AG04450 (cell line): ENCODE measurements at regions of chr9 and their contacts with region 1.

Region 1: GRCh38 chr9:5593904-5594303 is 35.0 kb upstream of the RIC1 start:
- DNase-seq: no peak
- H3K4me3 ChIP-seq: no peak overlapping the region
- H3K27ac ChIP-seq: no peak overlapping the region
- H3K27me3 ChIP-seq: no peaks in the 10 kb centered on the region
- CTCF ChIP-seq: no peak

Region 2: GRCh38 chr9:5008202-5008601 is 585.7 kb before region 1 on chr9:
- CTCF ChIA-PET with region 1: no interaction called
- POLR2A ChIA-PET with region 1: no interaction called
- DNase-seq: no peak
- H3K4me3 ChIP-seq: no peak overlapping the region
- H3K27ac ChIP-seq: no peak overlapping the region
- H3K27me3 ChIP-seq: no peaks in the 10 kb centered on the region
- CTCF ChIP-seq: no peak

Region 3: DNA sequence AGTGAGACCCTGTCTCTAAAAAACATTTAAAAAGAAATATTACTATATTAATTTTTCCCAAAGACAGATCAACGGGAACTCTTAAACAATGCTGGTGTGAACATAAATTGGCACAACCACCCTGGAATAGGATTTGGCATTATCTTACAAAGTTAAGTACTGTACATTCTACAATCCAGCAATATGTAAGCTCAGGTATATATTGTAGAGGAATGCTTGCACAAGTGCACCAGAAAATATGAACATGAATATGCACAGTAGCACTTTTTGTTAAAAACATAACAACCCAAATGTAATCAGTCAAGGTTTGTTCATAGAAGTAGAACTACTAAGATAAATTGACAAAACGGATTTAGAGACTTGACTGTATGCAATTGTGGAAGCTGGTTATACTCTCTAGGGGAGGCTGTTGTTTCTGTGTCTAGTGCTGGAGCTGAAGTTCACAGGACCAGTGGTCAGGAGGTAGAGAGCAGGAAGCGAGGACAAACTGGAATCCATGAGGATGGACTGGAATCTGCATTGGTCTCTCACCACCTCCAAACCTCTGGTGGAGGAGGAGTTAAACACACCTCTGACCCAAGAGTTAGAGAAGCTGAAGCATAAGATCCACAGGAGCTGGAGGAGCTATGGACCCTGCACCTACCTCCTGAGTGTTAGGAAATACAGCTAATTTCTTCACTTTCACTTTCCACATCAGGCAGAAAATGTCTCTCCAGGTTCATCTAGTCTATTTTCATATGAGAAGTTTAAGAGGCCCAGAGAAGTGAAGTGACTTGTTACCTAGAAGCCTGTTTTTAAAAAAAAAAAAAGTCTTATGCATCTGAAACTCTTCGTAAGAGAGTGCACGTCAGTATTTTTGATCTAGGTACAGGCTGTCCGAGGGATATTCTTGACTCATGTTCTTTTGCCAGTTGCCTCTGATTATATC is 14.7 kb after region 1 on chr9:
- CTCF ChIA-PET with region 1: interaction called, 26 read pairs
- POLR2A ChIA-PET with region 1: no interaction called
- DNase-seq: no peak
- H3K4me3 ChIP-seq: no peak overlapping the region
- H3K27ac ChIP-seq: no peak overlapping the region
- H3K27me3 ChIP-seq: no peaks in the 10 kb centered on the region
- CTCF ChIP-seq: no peak

Region 4: GRCh38 chr9:7115606-7116005 is 1521.7 kb after region 1 on chr9:
- CTCF ChIA-PET with region 1: no interaction called
- POLR2A ChIA-PET with region 1: no interaction called
- DNase-seq: no peak
- H3K4me3 ChIP-seq: no peak overlapping the region
- H3K27ac ChIP-seq: no peak overlapping the region
- H3K27me3 ChIP-seq: no peaks in the 10 kb centered on the region
- CTCF ChIP-seq: no peak